Posterior cingulate gyrus (tissue), 11 donors: ENCODE measurements at regions of chrX and their contacts with region 1.

Region 1: GRCh38 chrX:81121513-81122382 is 80.0 kb downstream of the HMGN5 start:
- DNase-seq: peak; percentile 69 to 98 (median 86)

Region 2: GRCh38 chrX:79704325-79704724 is 1417.4 kb before region 1 on chrX:
- intact Hi-C with region 1: no loop called
- DNase-seq: no peak

Region 3: GRCh38 chrX:80237072-80237471 is 884.7 kb before region 1 on chrX:
- intact Hi-C with region 1: no loop called
- DNase-seq: no peak

Region 4: GRCh38 chrX:80808160-80808735 is 313.5 kb before region 1 on chrX:
- intact Hi-C with region 1: loop called (anchors 5 kb)
- DNase-seq: peak; percentile 58 to 94 (median 72)

Region 5: GRCh38 chrX:81286646-81287045 is 164.9 kb after region 1 on chrX:
- intact Hi-C with region 1: no loop called
- DNase-seq: no peak

Region 6: DNA sequence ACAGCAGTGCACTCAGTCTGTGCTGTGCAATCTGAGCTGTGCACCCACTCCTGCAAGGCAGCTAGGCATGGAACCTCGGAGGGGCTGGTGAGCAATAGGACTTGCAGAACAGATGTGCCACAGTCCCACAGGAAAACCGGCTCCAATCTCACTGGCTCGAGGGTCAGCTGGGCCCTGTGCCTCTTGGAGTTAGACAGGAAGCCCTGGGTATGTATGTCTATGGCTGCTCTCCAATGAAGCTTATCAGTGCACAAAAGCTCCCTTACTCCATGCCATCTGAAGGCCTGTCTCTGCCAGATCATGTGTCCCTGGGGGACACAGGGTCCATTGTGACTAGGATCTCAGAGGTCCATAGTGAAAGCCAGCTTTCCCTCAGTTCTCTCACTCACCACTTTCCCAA is 416.0 kb after region 1 on chrX:
- intact Hi-C with region 1: no loop called
- DNase-seq: peak in 8 of 10 donors; percentile 14 to 87 (median 46)